Activated CD4-positive, alpha-beta memory T cell treated with anti-CD3 and anti-CD28 coated beads for 36 hours (primary cell): ENCODE measurements at regions of chr7 and their contacts with region 1.

Region 1: DNA sequence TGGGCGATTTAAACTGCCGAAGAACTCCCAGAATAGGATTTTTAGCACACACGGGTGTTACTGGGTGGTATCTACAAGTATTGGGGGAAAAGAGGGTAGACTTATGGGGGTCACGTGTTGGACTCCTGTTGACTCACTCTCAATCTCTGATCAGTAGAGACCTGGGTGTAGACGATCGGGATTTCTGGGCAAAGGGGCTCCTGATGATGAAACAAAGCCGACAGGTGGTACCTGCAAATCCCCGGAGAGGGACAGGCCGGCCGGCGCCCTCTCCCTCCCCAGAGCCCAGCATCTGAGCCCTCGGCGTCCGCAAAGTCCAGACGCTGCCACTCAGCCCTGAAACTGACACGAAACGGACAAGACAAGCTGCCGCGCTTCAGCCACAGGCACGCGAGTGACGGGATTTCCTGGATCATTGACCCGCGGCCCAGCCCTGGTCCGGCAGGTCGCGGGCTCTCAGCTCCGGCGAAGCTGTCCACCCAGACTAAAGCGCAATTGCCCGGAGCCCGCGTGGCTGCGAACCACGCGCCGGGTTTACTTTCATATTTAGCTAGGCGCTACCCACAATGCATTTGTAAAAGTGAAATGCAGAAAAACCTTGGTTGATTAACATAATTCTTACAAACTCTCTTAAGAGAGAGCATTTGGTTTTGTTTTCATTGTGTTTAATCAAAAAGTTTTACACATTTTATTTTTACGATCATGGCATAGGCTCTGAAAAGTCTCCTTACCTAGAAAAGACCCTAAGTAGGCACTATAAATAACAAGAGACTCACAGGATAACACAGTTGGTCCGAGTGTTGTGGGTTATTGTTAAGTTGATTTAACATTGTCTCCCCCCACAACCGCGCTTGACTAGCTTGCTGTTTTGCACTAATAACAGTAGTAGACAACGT is 56.9 kb upstream of the EZH2 start:
- DNase-seq: peak; percentile 70
- H3K4me3 Mint-ChIP-seq: peak overlapping the region; percentile 94
- H3K27ac Mint-ChIP-seq: peak overlapping the region; percentile 94
- H3K4me1 Mint-ChIP-seq: peaks cover 14% of the 10 kb centered on the region
- H3K27me3 Mint-ChIP-seq: no peaks in the 10 kb centered on the region

Region 2: DNA sequence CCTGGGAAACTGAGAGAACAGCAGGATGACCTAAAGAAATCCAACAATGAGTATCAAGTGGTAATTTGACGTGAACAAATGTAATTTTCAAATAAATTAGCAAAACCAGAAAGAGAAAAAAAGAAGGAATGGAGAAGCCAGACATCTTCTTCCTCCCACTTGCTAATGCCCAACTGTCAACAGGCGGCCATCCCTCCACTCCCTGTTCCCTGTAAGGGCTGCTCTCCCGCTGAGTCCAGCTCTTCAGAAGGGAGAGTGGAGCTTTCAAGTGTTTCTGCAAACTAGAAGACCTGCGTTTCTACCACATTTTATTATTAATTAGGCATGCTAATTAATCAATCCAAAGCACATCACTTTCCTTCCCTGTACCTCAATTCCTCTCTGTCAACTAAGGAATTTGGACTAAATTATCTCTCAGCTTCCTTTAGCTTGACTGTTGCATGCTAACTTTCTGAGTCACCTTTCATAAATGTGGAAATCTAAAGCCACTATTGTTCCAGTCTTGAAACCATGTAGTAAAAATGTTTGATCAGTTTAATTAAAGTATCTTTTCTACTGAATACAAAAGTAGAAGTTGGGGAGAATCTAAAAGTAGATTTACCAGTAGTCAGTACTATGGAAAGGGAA is 290.6 kb before region 1 on chr7:
- CTCF ChIA-PET with region 1: no interaction called
- POLR2A ChIA-PET with region 1: no interaction called
- intact Hi-C with region 1: no loop called
- DNase-seq: no peak
- H3K4me3 Mint-ChIP-seq: no peak overlapping the region
- H3K27ac Mint-ChIP-seq: no peak overlapping the region
- H3K4me1 Mint-ChIP-seq: no peaks in the 10 kb centered on the region
- H3K27me3 Mint-ChIP-seq: peaks cover 1% of the 10 kb centered on the region

Region 3: DNA sequence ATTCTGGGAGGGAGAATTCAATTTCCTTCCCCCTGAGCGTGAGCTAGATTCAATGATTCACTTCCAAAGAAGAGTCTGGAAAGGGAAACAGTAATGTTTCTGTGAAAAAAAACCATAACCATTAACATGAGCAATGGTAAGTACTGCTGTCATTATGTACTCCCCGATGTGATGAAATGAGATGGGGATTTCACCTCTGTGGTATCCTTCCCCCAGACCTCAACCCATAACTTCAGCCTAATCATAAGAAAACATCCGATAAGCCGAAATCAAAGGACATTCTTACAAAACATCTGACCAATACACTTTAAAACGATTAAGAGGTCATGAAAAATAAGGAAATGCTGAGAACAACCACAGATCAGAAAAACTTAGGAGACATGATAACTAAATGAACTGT is 84.1 kb before region 1 on chr7:
- CTCF ChIA-PET with region 1: interaction called, 23 read pairs
- POLR2A ChIA-PET with region 1: interaction called, 6 read pairs
- intact Hi-C with region 1: loop called (anchors 1 kb)
- DNase-seq: peak; percentile 50
- H3K4me3 Mint-ChIP-seq: peak overlapping the region; percentile 40
- H3K27ac Mint-ChIP-seq: peak overlapping the region; percentile 82
- H3K4me1 Mint-ChIP-seq: peaks cover 39% of the 10 kb centered on the region
- H3K27me3 Mint-ChIP-seq: no peaks in the 10 kb centered on the region

Region 4: GRCh38 chr7:148914208-148914777 is 26.7 kb before region 1 on chr7:
- CTCF ChIA-PET with region 1: interaction called, 36 read pairs
- POLR2A ChIA-PET with region 1: interaction called, 32 read pairs
- intact Hi-C with region 1: loop called (anchors 1 kb)
- DNase-seq: peak; percentile 87
- H3K4me3 Mint-ChIP-seq: peak overlapping the region; percentile 62
- H3K27ac Mint-ChIP-seq: peak overlapping the region; percentile 93
- H3K4me1 Mint-ChIP-seq: peaks cover 66% of the 10 kb centered on the region
- H3K27me3 Mint-ChIP-seq: no peaks in the 10 kb centered on the region

Region 5: DNA sequence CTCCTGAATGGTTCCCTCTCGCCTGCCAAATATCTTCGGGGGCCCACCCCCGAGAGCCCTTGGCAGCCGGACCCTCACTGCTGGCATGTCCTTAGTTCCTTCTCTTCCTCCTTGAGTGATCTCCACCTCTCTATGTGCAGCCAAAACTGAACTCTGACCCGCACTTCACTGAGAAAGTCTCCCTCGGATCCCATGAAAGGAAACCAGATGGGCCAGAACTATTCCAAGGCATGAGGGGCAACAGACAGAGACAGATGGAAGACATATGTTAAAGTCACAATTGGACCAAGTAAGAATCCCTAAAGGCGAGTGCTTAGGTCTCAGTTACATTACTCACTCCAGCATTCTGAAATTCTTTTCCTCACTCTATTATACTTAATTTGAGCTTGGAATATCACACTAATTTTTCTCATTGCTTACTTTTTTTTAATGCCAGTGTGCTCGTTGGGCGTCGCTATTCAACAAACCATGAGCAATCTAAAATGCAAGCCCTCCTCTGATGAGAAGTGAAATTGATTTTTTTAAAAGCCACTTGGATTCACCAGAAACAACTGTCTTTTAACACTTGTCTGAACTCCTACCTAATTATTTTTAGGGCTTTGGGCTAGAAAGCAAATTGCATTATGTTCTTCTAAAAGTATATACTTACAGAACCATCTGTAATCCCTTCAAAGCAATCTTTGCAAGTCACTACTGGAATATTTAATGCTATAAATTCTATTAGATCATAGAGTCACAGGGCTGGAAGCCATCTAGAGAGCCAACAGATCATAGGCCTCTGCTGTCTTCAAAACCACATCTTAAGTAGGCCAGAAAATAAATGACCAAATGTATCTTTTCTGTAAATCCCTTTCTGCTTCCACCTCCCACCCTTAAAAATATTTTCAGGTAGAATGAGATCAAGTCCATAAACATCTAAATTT is 13.6 kb before region 1 on chr7:
- CTCF ChIA-PET with region 1: interaction called, 3 read pairs
- POLR2A ChIA-PET with region 1: no interaction called
- intact Hi-C with region 1: loop called (anchors 1 kb)
- DNase-seq: no peak
- H3K4me3 Mint-ChIP-seq: no peak overlapping the region
- H3K27ac Mint-ChIP-seq: peak overlapping the region; percentile 76
- H3K4me1 Mint-ChIP-seq: peaks cover 33% of the 10 kb centered on the region
- H3K27me3 Mint-ChIP-seq: no peaks in the 10 kb centered on the region